ENCODE measurements at regions of chrX and their contacts with region 1.

Region 1: GRCh38 chrX:44244008-44244407 is 99.5 kb downstream of the EFHC2 start:
- DNase-seq: no peak

Region 2: GRCh38 chrX:43386875-43387274 is 857.1 kb before region 1 on chrX:
- intact Hi-C with region 1: no loop called
- DNase-seq: no peak

Region 3: DNA sequence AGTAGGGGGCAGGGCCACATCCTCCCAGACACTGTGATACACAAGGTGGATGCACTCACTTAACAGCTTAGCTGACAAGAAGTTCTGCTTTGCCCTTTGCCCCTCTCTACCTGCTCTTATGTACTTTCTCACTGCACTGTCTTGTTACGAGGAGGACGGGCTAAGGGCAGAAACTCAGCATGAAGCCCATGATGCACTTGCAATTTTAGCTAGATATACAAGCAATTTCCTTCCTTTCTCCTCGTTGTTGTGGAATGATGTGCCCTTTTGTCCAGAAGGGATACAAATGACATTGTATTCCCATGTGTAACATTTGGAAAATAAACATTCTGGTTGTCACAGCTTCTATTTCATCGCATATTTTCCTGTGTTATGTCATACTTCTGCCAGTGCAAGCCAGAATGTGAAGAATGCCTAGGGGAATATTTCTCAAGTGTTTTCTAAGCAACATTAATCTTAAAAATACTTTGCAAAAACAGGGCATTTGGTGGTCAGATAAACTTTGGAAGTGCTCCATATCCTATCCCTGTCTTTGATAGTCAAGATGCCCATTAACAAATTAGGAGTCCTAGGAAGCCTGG is 540.7 kb before region 1 on chrX:
- intact Hi-C with region 1: no loop called
- DNase-seq: no peak

Region 4: DNA sequence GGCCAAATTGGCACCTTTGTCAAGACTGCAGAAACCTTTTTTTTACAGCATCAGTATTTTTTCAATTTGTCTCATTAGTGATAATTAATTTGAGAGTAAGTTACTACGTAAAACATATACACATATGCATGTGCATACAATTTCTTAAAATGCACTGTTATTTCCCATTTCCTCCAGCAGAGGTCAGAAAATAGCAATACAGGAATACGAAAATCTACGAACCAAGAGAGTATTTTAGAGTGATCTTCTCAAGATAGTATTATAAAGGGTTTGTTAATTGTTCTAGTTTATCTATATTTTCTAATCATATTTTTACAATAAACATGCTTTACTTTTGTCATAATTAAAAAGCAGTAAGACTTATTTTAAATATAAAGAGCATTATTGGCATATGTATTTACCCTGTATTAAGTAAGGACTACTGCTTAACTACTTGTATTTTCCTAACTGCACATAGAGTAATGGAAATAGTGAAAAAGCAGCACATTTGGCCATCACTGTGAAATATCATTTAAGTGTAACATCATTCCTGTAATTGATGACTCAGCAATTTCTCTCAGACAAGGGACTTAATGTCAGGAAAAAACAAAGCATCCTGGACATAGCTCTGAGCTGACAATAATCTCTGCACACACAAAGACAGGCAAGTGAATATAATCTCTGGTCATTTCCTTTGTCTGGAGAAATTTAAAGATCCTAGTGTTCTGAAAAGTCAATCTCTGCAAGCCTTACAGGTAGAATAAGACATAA is 407.4 kb before region 1 on chrX:
- intact Hi-C with region 1: loop called (anchors 5 kb)
- DNase-seq: no peak

Region 5: DNA sequence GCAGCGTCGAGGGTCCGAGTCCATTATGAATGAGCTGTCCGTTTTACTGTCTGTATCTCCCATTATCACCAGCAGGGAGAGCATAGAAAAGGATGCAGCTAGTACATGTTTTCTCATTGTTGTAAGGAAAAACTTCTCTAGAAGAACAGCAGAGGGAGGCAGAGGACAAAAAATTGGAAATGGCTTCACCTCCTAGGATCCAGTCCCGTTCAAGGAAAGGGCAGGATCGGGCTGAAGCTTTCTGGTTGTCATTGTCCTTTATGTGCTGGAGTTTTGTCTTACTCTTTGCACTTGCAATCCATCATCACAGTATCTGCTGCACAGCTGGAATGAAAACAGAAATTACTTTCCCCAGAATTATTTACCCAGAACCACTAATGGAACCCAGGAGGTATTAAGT is 285.5 kb before region 1 on chrX:
- intact Hi-C with region 1: loop called (anchors 1 kb)
- DNase-seq: peak in 3 of 10 donors; percentile 14 to 75 (median 31)

Measured in posterior cingulate gyrus (tissue), 11 donors.